ENCODE measurements at regions of chr2 and their contacts with region 1.

Region 1: GRCh38 chr2:11784747-11785610 is 38.5 kb downstream of the LPIN1 start:
- DNase-seq: peak; percentile 57
- ATAC-seq: peak; percentile 64 to 68
- H3K4me3 ChIP-seq: peak overlapping the region; percentile 45
- H3K27ac ChIP-seq: no peak overlapping the region
- H3K4me1 ChIP-seq: no peaks in the 10 kb centered on the region
- H3K27me3 ChIP-seq: no peaks in the 10 kb centered on the region
- CTCF ChIP-seq: peak; percentile 90

Region 2: GRCh38 chr2:11437602-11438001 is 347.4 kb before region 1 on chr2:
- intact Hi-C with region 1: no loop called
- DNase-seq: no peak
- ATAC-seq: no peak
- H3K4me3 ChIP-seq: no peak overlapping the region
- H3K27ac ChIP-seq: no peak overlapping the region
- H3K4me1 ChIP-seq: no peaks in the 10 kb centered on the region
- H3K27me3 ChIP-seq: no peaks in the 10 kb centered on the region
- CTCF ChIP-seq: no peak

Region 3: GRCh38 chr2:11688222-11689069 is 96.5 kb before region 1 on chr2:
- intact Hi-C with region 1: loop called (anchors 5 kb)
- DNase-seq: peak; percentile 87
- ATAC-seq: peak; percentile 89 to 91
- H3K4me3 ChIP-seq: peak overlapping the region; percentile 26
- H3K27ac ChIP-seq: peak overlapping the region; percentile 31
- H3K4me1 ChIP-seq: peaks cover 16% of the 10 kb centered on the region
- H3K27me3 ChIP-seq: peaks cover 8% of the 10 kb centered on the region
- CTCF ChIP-seq: peak; percentile 91

Measured in lower lobe of right lung (tissue), 2 donors.